ENCODE measurements at regions of chr14 and their contacts with region 1.

Region 1: DNA sequence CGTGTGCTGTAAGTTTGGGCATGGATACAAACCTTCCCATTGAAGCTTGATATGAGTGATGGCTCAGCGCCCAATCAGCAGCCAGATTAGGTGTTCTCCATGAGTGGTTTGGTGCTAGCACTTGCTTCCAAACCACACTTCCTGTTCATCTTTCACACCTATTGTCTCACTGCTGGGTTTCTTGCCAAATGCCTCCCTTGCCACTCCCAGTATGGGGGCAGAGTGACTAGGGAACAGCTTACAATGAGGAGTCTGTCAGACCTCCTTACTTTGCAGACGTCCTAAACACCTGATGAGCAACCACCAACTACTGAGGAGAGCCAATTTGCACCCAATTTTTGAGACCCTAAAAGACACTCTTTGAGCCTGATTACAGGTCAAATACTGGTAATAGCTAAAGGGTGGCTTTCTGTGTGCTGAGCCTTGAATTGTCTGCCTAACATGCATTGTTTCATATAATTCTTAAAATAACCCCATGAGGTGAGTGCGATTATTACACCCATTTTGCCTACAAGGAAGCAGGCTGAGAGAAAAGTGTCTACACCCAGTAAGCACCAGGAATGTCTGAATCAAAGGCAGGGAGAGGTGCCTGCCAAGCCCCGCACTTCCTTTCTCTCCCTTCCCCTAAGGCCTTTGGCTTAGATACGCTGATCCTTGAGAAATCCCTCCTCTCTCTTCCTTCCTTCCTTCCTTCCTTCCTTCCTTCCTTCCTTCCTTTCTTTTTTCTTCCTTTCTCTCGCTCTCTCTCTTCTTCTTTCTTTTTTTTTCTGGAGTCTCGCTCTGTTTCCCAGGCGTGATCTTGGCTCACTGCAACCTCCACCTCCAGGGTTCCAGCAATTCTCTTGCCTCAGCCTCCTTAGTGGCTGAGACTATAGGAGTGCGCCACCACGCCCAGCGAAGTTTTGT is 48.2 kb upstream of the FOS start:
- DNase-seq: peak; percentile 43
- CTCF ChIP-seq: no peak

Region 2: DNA sequence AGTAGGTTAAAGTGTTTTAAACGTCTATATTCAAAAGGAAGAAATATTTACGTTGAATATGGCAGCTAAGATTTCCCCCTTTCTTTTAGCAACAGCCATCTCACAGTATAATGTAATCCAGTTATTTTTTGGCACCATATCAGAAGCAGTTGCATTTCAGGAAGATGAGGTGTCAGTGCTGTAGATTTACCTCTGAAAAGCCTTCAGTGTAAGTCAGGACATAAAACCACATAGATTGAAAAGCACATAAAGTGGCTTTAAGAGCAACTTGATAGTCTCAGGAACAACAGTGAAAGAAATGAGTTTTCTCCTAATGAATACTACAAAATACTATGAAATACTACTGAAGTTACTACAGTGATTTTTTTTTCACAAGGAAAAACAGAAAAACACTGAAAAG is 186.1 kb before region 1 on chr14:
- CTCF ChIA-PET with region 1: no interaction called
- POLR2A ChIA-PET with region 1: no interaction called
- DNase-seq: no peak
- CTCF ChIP-seq: no peak

Region 3: GRCh38 chr14:75188520-75189268 is 41.7 kb before region 1 on chr14:
- CTCF ChIA-PET with region 1: no interaction called
- POLR2A ChIA-PET with region 1: no interaction called
- DNase-seq: no peak
- CTCF ChIP-seq: no peak

Region 4: DNA sequence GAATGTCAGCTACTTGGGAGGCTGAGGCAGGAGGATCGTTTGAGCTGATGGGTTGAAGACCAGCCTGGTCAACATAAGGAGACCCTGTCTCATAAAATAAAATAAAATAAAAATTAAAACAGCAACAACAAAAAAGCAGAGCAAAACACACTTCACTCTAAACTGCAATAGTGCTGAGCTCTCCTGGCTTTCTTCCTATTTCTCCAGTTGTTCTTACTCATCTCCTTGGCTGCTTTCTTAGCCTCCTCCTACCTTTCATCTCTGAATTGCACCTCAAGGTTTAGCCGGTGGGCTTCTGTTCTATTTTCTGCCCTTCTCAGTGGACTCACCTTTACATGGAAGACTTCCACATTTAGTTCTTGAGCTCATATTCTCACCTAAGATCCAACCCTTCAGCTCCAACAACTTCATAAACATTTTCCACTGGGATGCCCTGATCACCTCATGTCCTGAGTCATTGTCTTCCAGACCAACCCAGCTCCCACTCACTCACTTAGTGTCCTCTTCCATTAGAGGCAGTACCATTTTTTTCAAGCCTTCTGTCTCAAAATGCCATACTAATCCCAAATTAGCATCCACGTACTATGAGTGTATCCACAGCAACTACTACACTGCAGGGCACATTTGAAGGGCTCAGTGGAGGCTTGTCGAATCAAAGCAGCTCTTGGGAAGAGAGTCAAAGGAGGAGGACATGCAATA is 12.7 kb before region 1 on chr14:
- CTCF ChIA-PET with region 1: interaction called, 10 read pairs
- POLR2A ChIA-PET with region 1: interaction called, 3 read pairs
- DNase-seq: no peak
- CTCF ChIP-seq: no peak

Region 5: DNA sequence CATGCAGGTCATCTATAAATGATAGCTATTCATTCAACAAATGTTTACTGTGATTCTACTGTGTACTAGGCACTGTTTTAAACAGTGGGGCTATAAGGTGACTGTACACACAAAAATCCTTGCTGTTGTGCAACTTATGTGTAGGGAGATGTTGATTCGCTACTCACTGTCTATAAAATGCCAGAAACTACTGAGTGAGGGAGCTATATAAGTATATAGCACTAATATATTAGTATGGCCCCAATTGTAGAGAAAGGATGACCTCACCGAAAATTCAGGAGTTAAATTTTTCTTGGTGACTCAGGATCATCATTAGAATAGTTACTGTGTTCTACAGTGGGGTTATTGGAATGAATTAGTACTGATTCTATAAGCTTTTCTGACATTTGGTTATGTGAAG is 634.0 kb after region 1 on chr14:
- CTCF ChIA-PET with region 1: no interaction called
- POLR2A ChIA-PET with region 1: no interaction called
- DNase-seq: no peak
- CTCF ChIP-seq: no peak

Measured in GM10248 (cell line).